ENCODE measurements at regions of chr2 and their contacts with region 1.

Region 1: GRCh38 chr2:43226558-43226954 is at the start of gene ZFP36L2:
- DNase-seq: peak; percentile 98
- ATAC-seq: peak; percentile 75
- H3K4me3 Mint-ChIP-seq: peak within 1 kb of the TSS; percentile 83
- H3K27ac Mint-ChIP-seq: peak within 1 kb of the TSS; percentile 91
- H3K4me1 Mint-ChIP-seq: peaks cover 37% of the 10 kb centered on the region
- H3K27me3 Mint-ChIP-seq: no peaks in the 10 kb centered on the region
- total RNA-seq, gene ZFP36L2: 74.4 to 77.7 TPM

Region 2: GRCh38 chr2:42494355-42495233 is 732.0 kb before region 1 on chr2:
- CTCF ChIA-PET with region 1: no interaction called
- POLR2A ChIA-PET with region 1: no interaction called
- intact Hi-C with region 1: loop called in 1 of 2 experiments (anchors 10 kb)
- DNase-seq: peak; percentile 89
- ATAC-seq: peak; percentile 59
- H3K4me3 Mint-ChIP-seq: peak overlapping the region; percentile 80
- H3K27ac Mint-ChIP-seq: peak overlapping the region; percentile 81
- H3K4me1 Mint-ChIP-seq: peaks cover 17% of the 10 kb centered on the region
- H3K27me3 Mint-ChIP-seq: peaks cover 8% of the 10 kb centered on the region

Region 3: GRCh38 chr2:42944779-42945415 is 281.7 kb before region 1 on chr2:
- CTCF ChIA-PET with region 1: interaction called, 43 read pairs
- POLR2A ChIA-PET with region 1: no interaction called
- intact Hi-C with region 1: loop called (anchors 1 kb)
- DNase-seq: no peak
- ATAC-seq: no peak
- H3K4me3 Mint-ChIP-seq: no peak overlapping the region
- H3K27ac Mint-ChIP-seq: no peak overlapping the region
- H3K4me1 Mint-ChIP-seq: peaks cover 3% of the 10 kb centered on the region
- H3K27me3 Mint-ChIP-seq: no peaks in the 10 kb centered on the region

Region 4: GRCh38 chr2:43059183-43059897 is 167.2 kb before region 1 on chr2:
- CTCF ChIA-PET with region 1: interaction called, 6 read pairs
- POLR2A ChIA-PET with region 1: no interaction called
- intact Hi-C with region 1: loop called (anchors 1 to 5 kb)
- DNase-seq: peak; percentile 87
- ATAC-seq: peak; percentile 97
- H3K4me3 Mint-ChIP-seq: peak overlapping the region; percentile 14
- H3K27ac Mint-ChIP-seq: peak overlapping the region; percentile 77
- H3K4me1 Mint-ChIP-seq: peaks cover 35% of the 10 kb centered on the region
- H3K27me3 Mint-ChIP-seq: no peaks in the 10 kb centered on the region

Region 5: GRCh38 chr2:43169987-43170386 is 56.6 kb before region 1 on chr2:
- CTCF ChIA-PET with region 1: interaction called, 38 read pairs
- POLR2A ChIA-PET with region 1: interaction called, 8 read pairs
- intact Hi-C with region 1: loop called (anchors 1 kb)
- DNase-seq: peak; percentile 85
- ATAC-seq: peak; percentile 27
- H3K4me3 Mint-ChIP-seq: peak overlapping the region; percentile 24
- H3K27ac Mint-ChIP-seq: peak overlapping the region; percentile 91
- H3K4me1 Mint-ChIP-seq: peaks cover 79% of the 10 kb centered on the region
- H3K27me3 Mint-ChIP-seq: no peaks in the 10 kb centered on the region

Region 6: DNA sequence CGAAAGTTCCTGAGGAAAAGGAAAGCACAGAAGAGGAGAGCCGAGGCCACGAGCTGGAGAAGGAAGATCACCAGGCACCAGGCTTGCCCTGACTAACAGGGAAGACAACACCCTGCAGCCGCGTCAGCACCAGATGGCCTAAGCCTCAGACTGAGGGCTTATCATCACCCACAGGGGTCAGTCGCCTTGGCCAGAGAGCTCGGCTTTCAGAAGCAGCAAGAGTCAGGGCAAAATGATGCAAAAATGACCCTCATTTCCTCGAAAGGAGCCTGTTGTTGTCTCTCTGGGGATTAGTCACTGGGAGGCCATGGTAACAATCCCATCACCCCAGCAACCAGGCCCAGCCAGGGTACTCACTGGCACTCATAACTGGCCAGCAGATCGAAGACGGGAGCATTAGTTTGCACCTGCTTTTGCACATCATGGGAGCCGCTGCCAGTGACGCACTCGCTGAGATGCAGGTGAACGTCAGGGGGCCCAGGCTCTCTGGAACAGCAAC is 42.6 kb after region 1 on chr2:
- CTCF ChIA-PET with region 1: no interaction called
- POLR2A ChIA-PET with region 1: no interaction called
- intact Hi-C with region 1: no loop called
- DNase-seq: no peak
- ATAC-seq: no peak
- H3K4me3 Mint-ChIP-seq: no peak overlapping the region
- H3K27ac Mint-ChIP-seq: no peak overlapping the region
- H3K4me1 Mint-ChIP-seq: peaks cover 20% of the 10 kb centered on the region
- H3K27me3 Mint-ChIP-seq: no peaks in the 10 kb centered on the region

Region 7: DNA sequence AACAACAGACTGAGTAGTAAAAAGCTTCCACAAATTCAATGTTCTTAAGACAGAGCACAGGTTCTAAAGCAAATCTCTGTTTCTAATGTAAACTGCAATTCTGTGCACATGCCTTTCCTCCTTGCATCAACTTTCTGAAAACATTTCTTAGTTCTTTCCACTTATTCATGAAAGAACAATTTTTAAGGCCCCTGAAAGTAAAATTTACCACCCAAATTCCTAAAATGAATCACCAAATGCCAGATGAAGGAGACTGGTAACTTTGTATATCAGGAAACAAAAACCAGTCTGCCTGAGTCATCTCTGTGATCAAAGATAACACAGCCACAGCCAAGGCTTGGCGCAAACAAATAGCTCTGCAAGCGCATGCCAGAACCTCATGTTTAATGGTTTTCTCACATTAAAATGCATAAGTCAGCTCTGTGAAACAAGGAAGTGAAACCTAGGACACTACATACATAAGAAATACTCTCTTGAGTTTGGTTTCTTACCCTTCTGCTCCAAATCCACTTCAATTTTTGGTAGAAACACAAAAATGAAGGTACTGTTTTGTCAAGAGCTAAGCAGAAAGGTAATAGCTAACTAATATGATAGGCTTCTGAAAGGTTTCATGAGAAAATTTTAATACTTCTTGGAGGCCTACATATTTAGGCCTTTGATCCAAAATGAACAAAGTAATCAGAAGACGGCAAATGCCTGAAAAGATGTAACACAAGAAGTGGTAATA is 199.9 kb after region 1 on chr2:
- CTCF ChIA-PET with region 1: no interaction called
- POLR2A ChIA-PET with region 1: no interaction called
- intact Hi-C with region 1: loop called in 1 of 2 experiments (anchors 1 kb)
- DNase-seq: peak; percentile 82
- ATAC-seq: peak; percentile 94
- H3K4me3 Mint-ChIP-seq: no peak overlapping the region
- H3K27ac Mint-ChIP-seq: peak overlapping the region; percentile 43
- H3K4me1 Mint-ChIP-seq: peaks cover 34% of the 10 kb centered on the region
- H3K27me3 Mint-ChIP-seq: peaks cover 2% of the 10 kb centered on the region

Region 8: GRCh38 chr2:43595603-43596412 is 369.3 kb after region 1 on chr2 and contains the start of gene THADA:
- CTCF ChIA-PET with region 1: no interaction called
- POLR2A ChIA-PET with region 1: no interaction called
- intact Hi-C with region 1: loop called in 1 of 2 experiments (anchors 2 kb)
- DNase-seq: peak; percentile 99
- ATAC-seq: peak; percentile 97
- H3K4me3 Mint-ChIP-seq: peak within 1 kb of the TSS; percentile 89
- H3K27ac Mint-ChIP-seq: peak within 1 kb of the TSS; percentile 98
- H3K4me1 Mint-ChIP-seq: peaks cover 34% of the 10 kb centered on the region
- H3K27me3 Mint-ChIP-seq: peaks cover 2% of the 10 kb centered on the region
- total RNA-seq, gene THADA: 32.5 to 36.6 TPM

Region 9: DNA sequence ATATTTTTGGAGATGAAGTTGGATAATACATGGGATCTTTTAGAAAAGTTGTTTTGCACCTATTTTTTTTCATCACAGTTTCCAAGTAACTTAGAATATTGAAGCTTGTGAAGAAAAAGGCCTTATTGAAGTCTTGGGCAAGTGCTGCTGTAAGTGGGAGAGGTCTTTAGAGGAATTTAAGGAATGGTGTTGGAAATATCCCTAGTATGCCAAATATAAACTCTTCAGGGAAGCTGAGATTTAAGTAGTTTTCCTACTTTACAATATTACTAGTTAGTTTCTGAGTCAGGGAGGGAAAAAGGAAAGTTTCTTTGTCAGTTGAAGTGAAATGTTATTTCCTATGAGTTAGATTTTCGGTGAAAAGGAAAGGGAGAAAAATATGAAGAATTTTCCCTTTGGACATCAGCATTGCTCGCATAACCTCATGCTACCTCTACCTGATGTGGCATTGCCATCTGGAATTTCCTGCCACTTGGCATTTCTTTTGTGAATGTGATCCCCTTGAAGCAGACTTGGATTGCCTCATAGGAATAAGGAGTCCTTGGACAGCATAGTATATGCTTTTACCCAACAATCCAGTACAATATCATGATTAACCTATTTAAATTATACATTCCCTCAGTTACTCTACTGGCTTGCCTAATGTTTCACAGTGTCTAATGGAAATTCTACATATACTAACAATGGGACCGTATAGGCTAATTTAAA is 422.6 kb after region 1 on chr2:
- CTCF ChIA-PET with region 1: no interaction called
- POLR2A ChIA-PET with region 1: no interaction called
- intact Hi-C with region 1: no loop called
- DNase-seq: no peak
- ATAC-seq: no peak
- H3K4me3 Mint-ChIP-seq: no peak overlapping the region
- H3K27ac Mint-ChIP-seq: no peak overlapping the region
- H3K4me1 Mint-ChIP-seq: no peaks in the 10 kb centered on the region
- H3K27me3 Mint-ChIP-seq: peaks cover 9% of the 10 kb centered on the region

Measured in activated CD4-positive, alpha-beta T cell treated with anti-CD3 and anti-CD28 coated beads for 36 hours (primary cell).